Colonic mucosa (tissue), 4 donors: ENCODE measurements at regions of chr11 and their contacts with region 1.

Region 1: DNA sequence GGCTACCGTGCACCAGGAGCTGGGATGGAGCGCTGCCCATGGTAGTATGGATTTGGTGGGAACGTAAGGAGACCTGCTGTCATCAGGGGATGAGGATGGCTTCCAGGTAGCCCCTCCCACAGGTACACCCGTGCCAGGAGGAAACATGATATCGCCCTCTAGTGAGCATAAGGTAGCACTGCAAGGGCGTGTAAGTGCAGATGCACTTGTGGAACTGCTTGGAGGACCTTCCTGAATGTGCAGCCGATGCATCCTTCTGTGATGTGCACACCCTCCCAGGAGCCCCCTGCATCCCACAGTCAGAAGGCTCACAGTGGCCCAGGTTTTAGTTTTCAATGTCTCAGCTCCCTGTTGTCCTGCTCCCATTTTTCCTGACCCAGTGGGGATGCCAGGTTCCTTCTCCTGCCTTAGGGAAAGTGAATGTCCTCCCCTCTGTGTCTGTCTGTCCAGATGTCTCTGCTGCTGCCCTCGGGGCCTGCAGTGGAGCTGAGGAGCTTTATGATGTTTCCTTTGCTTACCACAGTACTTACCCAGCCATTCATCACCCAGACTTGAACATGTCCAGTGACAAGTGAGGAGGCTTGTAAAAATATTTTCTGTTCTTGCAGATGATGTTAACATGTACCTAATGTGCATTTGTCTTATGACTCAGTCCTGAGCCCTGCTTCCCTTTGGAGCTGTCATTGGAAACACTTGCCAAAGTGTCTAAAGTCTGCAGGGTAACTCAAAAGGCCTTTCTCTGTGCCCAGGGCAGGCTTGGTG is 49.2 kb downstream of the DBX1 start:
- DNase-seq: peak; percentile 66
- H3K4me3 ChIP-seq: no peak overlapping the region
- H3K27ac ChIP-seq: no peak overlapping the region
- H3K4me1 ChIP-seq: peaks cover 3% of the 10 kb centered on the region
- H3K27me3 ChIP-seq: no peaks in the 10 kb centered on the region
- CTCF ChIP-seq: peak; percentile 78

Region 2: DNA sequence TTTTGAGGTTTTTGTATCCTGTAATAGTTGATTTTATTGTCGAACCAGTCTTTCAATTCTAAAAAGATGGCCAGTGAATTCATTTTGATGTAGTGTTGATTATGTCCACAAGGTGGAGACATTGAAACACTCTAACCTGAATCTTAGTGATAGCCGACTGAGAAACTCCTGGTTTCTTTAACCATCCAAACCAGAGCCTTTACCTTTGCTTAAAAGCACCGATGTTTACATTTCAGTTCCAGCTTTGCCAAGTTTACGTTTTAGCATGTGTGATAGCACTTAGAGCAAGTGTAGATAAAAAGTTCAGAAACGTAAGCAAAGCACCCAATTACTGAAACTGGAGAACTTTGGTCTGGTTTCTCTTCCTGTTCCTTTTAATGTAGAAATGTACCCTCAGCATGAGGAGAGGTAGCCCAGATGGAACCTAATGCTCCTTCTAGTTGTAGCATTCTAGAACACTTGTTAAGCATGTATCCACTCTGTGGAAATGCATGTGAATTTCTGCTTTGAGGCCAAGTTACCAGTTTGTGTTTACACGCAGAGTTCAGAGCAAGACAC is 159.5 kb before region 1 on chr11:
- intact Hi-C with region 1: loop called (anchors 2 kb)
- DNase-seq: no peak
- H3K4me3 ChIP-seq: no peak overlapping the region
- H3K27ac ChIP-seq: no peak overlapping the region
- H3K4me1 ChIP-seq: peaks cover 4% of the 10 kb centered on the region
- H3K27me3 ChIP-seq: no peaks in the 10 kb centered on the region
- CTCF ChIP-seq: peak; percentile 54

Region 3: GRCh38 chr11:20172721-20173447 is 61.8 kb after region 1 on chr11:
- intact Hi-C with region 1: no loop called
- DNase-seq: no peak
- H3K4me3 ChIP-seq: no peak overlapping the region
- H3K27ac ChIP-seq: no peak overlapping the region
- H3K4me1 ChIP-seq: no peaks in the 10 kb centered on the region
- H3K27me3 ChIP-seq: no peaks in the 10 kb centered on the region
- CTCF ChIP-seq: no peak